H1 (cell line): ENCODE measurements at regions of chr17 and their contacts with region 1.

Region 1: GRCh38 chr17:46811978-46812583 is 6.4 kb downstream of the WNT3 start:
- DNase-seq: no peak
- H3K4me3 ChIP-seq: no peak overlapping the region
- H3K27ac ChIP-seq: no peak overlapping the region
- H3K4me1 ChIP-seq: peaks cover 0 to 29% (median 7%) of the 10 kb centered on the region in 4 experiments; a peak in 6 of 7 replicates
- H3K27me3 ChIP-seq: peaks cover 7 to 29% (median 23%) of the 10 kb centered on the region in 4 experiments
- CTCF ChIP-seq: no peak
- EP300 ChIP-seq: no peak
- POLR2A ChIP-seq: no peak
- RAD21 ChIP-seq: no peak

Region 2: DNA sequence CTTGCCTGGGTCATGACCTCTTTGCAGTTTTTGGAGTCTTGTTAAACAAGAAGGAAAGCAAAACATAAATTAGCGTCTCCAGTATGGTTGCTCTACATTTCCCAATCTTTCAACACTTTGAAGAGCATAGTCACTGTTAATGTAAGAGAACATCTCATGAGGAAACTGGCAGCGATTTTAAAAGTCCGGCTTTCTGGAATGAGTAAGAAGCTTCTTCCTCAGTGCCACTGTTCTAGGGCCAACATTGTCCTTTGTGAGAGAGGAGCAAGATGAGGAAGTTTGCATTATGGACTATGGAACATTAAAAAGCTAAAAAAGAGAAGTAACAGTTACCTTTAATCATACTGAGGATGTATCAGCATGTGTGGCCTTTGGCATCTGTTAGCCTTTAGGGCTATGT is 66.7 kb before region 1 on chr17:
- CTCF ChIA-PET with region 1: no interaction called
- POLR2A ChIA-PET with region 1: no interaction called
- DNase-seq: no peak
- H3K4me3 ChIP-seq: no peak overlapping the region
- H3K27ac ChIP-seq: no peak overlapping the region
- H3K4me1 ChIP-seq: peaks cover 0 to 3% (median 0%) of the 10 kb centered on the region in 4 experiments; a peak in 1 of 7 replicates
- H3K27me3 ChIP-seq: peaks cover 0 to 4% (median 0%) of the 10 kb centered on the region in 4 experiments; a peak in 2 of 7 replicates
- CTCF ChIP-seq: no peak
- EP300 ChIP-seq: no peak
- POLR2A ChIP-seq: no peak
- RAD21 ChIP-seq: no peak

Region 3: DNA sequence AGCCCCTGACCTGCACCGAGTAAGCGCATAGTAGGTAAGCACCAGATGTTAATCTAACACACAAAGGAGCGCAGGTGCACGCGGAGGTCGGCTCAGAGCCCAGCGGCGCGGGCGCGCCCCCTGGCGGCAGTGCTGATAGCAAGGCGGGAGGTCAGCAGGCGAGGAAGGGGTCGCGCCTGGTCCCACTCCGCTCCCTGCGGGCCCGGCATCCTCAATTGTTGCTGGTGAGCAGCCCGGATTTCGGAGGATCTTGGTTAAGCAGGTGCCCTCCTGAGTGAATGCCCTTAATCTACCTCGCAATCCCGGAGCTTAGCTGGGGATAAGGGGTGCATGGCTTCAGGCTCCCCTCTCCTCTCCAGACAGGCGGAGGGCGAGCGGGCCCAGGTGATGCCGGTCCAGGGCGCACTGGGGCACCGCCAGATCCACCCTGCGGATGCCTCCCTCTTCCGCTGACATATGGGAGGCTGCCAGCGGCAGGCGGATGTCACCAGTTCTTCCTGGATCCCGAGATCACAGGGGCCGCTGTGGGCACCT is 10.4 kb after region 1 on chr17:
- CTCF ChIA-PET with region 1: interaction called, 14 read pairs
- POLR2A ChIA-PET with region 1: interaction called, 4 read pairs
- DNase-seq: peak in 1 of 2 experiments; percentile 95
- H3K4me3 ChIP-seq: no peak overlapping the region
- H3K27ac ChIP-seq: no peak overlapping the region
- H3K4me1 ChIP-seq: peaks cover 0 to 28% (median 24%) of the 10 kb centered on the region in 4 experiments; a peak in 6 of 7 replicates
- H3K27me3 ChIP-seq: peaks cover 26 to 58% (median 48%) of the 10 kb centered on the region in 4 experiments
- CTCF ChIP-seq: peak; percentile 78 to 93 (median 86)
- EP300 ChIP-seq: no peak
- POLR2A ChIP-seq: no peak
- RAD21 ChIP-seq: peak; percentile 61 to 65

Region 4: DNA sequence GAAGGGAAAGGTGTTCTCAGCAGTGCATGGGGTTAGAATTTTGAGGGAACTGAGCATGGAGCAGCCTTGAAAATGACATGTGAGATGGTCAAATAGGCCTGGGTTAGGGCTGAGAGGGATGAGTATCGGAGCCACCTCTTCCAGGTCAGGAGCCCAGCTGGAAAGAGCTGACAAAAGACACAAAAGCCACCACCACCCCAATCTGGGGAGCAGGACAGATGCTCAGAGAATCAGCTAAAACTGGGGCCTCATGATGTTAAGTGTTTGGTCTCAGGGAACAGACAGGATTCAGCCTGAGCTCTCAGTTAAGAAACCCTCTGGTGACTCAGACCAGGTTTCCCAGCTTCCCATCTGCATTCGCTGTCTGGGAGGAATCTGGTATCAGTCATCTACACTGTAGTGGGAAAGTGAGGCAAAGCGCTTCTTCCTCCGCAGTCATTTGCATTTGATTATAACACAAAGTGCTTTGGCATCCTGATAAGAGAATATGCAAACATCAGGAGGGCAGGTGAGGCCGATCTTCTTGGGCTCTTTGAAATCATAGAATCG is 41.9 kb after region 1 on chr17:
- CTCF ChIA-PET with region 1: no interaction called
- POLR2A ChIA-PET with region 1: no interaction called
- DNase-seq: no peak
- H3K4me3 ChIP-seq: no peak overlapping the region
- H3K27ac ChIP-seq: no peak overlapping the region
- H3K4me1 ChIP-seq: peaks cover 0 to 5% (median 3%) of the 10 kb centered on the region in 4 experiments; a peak in 4 of 7 replicates
- H3K27me3 ChIP-seq: peaks cover 20 to 42% (median 34%) of the 10 kb centered on the region in 4 experiments
- CTCF ChIP-seq: no peak
- EP300 ChIP-seq: no peak
- POLR2A ChIP-seq: no peak
- RAD21 ChIP-seq: no peak

Region 5: GRCh38 chr17:46883871-46884520 is 71.9 kb after region 1 on chr17:
- CTCF ChIA-PET with region 1: no interaction called
- POLR2A ChIA-PET with region 1: no interaction called
- DNase-seq: no peak
- H3K4me3 ChIP-seq: no peak overlapping the region
- H3K27ac ChIP-seq: no peak overlapping the region
- H3K4me1 ChIP-seq: no peaks in the 10 kb centered on the region
- H3K27me3 ChIP-seq: no peaks in the 10 kb centered on the region
- CTCF ChIP-seq: no peak
- EP300 ChIP-seq: no peak
- POLR2A ChIP-seq: no peak
- RAD21 ChIP-seq: no peak